ENCODE measurements at regions of chr11 and their contacts with region 1.

Region 1: GRCh38 chr11:77113382-77114088 is 10.9 kb downstream of the OMP start:
- DNase-seq: peak in 1 of 2 experiments; percentile 75
- H3K4me3 ChIP-seq: no peak overlapping the region
- H3K27ac ChIP-seq: no peak overlapping the region
- H3K4me1 ChIP-seq: peaks cover 0 to 3% (median 1%) of the 10 kb centered on the region in 4 experiments; a peak in 3 of 7 replicates
- H3K27me3 ChIP-seq: no peaks in the 10 kb centered on the region
- CTCF ChIP-seq: peak; percentile 44 to 66 (median 59)
- EP300 ChIP-seq: no peak
- POLR2A ChIP-seq: no peak
- RAD21 ChIP-seq: peak; percentile 47 to 50

Region 2: DNA sequence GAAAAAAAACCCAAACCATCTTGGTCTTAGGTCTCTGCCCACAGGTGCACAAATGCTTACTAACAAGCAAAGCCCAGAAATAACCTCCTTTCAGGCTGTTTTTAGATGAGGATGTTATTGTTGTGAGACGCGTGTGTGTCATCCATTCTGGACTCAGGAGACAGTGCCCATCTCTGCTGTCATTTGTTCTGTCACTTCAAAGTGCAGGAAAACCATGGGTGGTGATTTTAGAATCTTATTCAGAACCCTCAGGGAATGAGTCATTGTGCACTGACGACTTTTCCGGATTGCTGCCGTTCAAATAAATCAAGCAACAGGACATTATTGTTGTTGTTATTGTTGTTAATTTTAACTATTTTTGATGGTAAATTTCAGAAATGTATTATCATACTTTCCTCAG is 553.3 kb before region 1 on chr11:
- CTCF ChIA-PET with region 1: no interaction called
- POLR2A ChIA-PET with region 1: no interaction called
- DNase-seq: no peak
- H3K4me3 ChIP-seq: no peak overlapping the region
- H3K27ac ChIP-seq: no peak overlapping the region
- H3K4me1 ChIP-seq: peaks cover 0 to under 1% (median 0%) of the 10 kb centered on the region in 4 experiments; a peak in 1 of 7 replicates
- H3K27me3 ChIP-seq: no peaks in the 10 kb centered on the region
- CTCF ChIP-seq: no peak
- EP300 ChIP-seq: no peak
- POLR2A ChIP-seq: no peak
- RAD21 ChIP-seq: no peak

Region 3: GRCh38 chr11:77027270-77027669 is 86.3 kb before region 1 on chr11:
- CTCF ChIA-PET with region 1: interaction called, 11 read pairs
- POLR2A ChIA-PET with region 1: no interaction called
- DNase-seq: no peak
- H3K4me3 ChIP-seq: no peak overlapping the region
- H3K27ac ChIP-seq: no peak overlapping the region
- H3K4me1 ChIP-seq: no peaks in the 10 kb centered on the region; a peak in 3 of 7 replicates
- H3K27me3 ChIP-seq: 0 out of 7 replicates have a peak, but pooled peaks cover 0 to 2% (median 0%) of the 10 kb centered on the region in 4 experiments
- CTCF ChIP-seq: no peak
- EP300 ChIP-seq: no peak
- POLR2A ChIP-seq: no peak
- RAD21 ChIP-seq: no peak

Region 4: DNA sequence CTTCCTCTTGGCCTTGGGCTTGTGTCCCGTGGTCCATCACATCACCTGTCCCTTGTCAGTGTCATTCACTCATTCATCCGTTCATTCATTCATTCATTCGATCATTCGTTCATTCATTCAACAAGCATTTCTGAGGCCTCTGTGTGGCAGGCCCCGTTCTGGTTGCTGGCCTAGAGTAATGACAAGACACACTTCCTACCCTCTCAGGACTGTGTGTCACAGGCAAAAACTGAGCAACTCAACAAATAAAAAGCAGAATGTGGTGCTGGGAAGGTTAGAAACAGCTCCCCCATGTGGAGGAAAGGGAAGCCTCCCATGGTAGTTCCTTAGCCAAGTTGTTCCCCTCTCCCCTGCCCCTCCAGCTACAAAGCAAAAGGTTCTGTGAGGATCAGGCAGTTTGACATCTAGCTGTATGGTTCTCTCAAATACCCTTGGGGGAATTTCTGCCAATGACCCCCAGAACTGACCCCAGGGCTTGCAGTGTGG is 12.4 kb before region 1 on chr11:
- CTCF ChIA-PET with region 1: interaction called, 297 read pairs
- POLR2A ChIA-PET with region 1: interaction called, 3 read pairs
- DNase-seq: no peak
- H3K4me3 ChIP-seq: no peak overlapping the region
- H3K27ac ChIP-seq: no peak overlapping the region
- H3K4me1 ChIP-seq: no peaks in the 10 kb centered on the region
- H3K27me3 ChIP-seq: no peaks in the 10 kb centered on the region
- CTCF ChIP-seq: peak; percentile 60 to 79 (median 71)
- EP300 ChIP-seq: no peak
- POLR2A ChIP-seq: no peak
- RAD21 ChIP-seq: peak; percentile 48 to 60

Region 5: DNA sequence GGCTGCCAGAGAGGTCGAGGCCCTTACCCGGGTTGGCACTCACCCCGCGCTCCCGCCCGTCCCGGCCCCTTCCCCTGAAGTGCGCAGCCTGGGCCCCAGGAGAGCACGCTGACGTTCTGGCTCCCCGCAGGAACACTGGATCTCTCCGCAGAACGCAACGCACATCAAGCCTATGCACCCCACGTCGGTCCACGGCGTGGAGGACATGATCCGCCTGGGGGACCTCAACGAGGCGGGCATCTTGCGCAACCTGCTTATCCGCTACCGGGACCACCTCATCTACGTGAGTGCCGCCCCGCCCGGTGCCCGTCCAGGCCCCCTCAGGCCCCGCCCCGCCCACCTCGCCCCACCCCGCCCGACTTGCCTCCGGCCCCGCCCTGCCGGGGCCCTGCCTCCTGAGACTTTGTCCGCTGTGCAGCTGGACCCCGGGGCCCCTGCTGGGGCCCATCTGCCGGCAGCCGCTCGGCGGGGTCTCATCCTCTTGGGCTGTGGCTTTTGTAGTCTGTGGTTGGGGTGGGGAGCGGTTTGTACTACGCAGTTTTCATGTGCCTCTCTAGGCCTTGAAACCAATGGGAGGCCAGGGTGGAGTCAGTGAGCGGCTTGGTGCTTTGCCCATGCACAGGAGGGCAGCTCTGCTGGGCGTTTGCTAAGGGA is 34.3 kb after region 1 on chr11:
- CTCF ChIA-PET with region 1: interaction called, 16 read pairs
- POLR2A ChIA-PET with region 1: interaction called, 4 read pairs
- DNase-seq: peak; percentile 29 to 79
- H3K4me3 ChIP-seq: peak overlapping the region; percentile 54 to 65 (median 58)
- H3K27ac ChIP-seq: no peak overlapping the region
- H3K4me1 ChIP-seq: peaks cover 0 to 11% (median 5%) of the 10 kb centered on the region in 4 experiments; a peak in 6 of 7 replicates
- H3K27me3 ChIP-seq: peaks cover 0 to 2% (median 0%) of the 10 kb centered on the region in 4 experiments; a peak in 2 of 7 replicates
- CTCF ChIP-seq: no peak
- EP300 ChIP-seq: no peak
- POLR2A ChIP-seq: no peak
- RAD21 ChIP-seq: no peak; a peak in 1 of 4 replicates

Region 6: GRCh38 chr11:77175869-77176539 is 62.5 kb after region 1 on chr11:
- CTCF ChIA-PET with region 1: interaction called, 28 read pairs
- POLR2A ChIA-PET with region 1: no interaction called
- DNase-seq: peak in 1 of 2 experiments; percentile 73
- H3K4me3 ChIP-seq: no peak overlapping the region
- H3K27ac ChIP-seq: 0 out of 2 replicates have a peak overlapping the region, but pooled peaks have one; percentile 30
- H3K4me1 ChIP-seq: peaks cover 18 to 50% (median 27%) of the 10 kb centered on the region in 4 experiments
- H3K27me3 ChIP-seq: peaks cover 0 to 3% (median 0%) of the 10 kb centered on the region in 4 experiments; a peak in 1 of 7 replicates
- CTCF ChIP-seq: no peak
- EP300 ChIP-seq: no peak
- POLR2A ChIP-seq: no peak
- RAD21 ChIP-seq: no peak